ENCODE measurements at regions of chr15 and their contacts with region 1.

Region 1: DNA sequence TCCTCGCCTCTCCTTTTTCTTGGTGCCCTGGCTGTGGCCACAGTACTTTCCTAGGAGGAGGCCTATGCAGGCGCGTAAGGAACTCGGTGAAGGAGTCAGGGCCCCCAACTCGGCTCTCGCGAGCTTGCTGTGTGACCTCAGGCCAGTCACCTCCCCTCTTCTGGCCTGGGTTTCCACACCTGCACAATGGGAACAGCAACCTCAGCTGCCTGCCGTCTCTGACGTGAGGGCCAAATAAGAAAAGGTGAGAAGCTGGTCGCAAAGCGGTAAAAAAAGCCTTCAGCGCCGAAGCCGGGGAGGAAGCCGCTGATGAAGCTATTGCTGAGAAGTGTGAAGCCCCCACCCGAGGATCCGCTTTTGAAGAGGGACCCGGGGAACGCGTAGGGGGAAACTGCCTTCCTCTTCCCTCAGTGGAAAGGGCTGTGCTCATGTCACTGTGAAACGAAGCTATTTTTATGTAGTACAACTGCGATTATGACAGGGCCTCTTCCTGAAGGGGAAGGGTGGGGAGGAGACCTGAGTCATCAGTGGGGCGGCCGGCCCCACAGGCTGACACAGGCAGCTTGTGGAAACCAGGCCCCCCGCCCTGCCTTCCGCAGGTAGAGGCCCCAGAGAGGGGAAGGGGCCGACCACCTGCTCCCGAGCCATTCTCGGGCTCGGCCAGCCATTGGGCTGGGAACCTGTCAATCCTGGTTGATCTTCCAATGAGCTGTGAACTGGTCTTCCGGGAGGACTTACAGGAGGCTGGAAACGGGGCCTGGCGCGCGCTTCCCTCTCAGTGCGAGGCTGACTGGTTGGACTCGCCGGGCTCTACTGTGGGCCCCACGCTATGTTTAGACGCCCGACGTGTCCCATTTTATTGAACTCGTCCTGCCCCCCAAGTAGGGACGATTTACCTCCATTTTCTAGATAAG is 18.0 kb upstream of the ANKDD1A start:
- DNase-seq: peak; percentile 90
- ATAC-seq: peak; percentile 72
- H3K4me3 Mint-ChIP-seq: peak overlapping the region; percentile 89
- H3K27ac Mint-ChIP-seq: peak overlapping the region; percentile 99
- H3K4me1 Mint-ChIP-seq: peaks cover 76% of the 10 kb centered on the region
- H3K27me3 Mint-ChIP-seq: no peaks in the 10 kb centered on the region
- CTCF ChIP-seq: no peak

Region 2: GRCh38 chr15:64731012-64731806 is 162.5 kb before region 1 on chr15:
- CTCF ChIA-PET with region 1: interaction called, 13 read pairs
- POLR2A ChIA-PET with region 1: interaction called, 4 read pairs
- intact Hi-C with region 1: loop called (anchors 1 kb)
- DNase-seq: peak; percentile 77
- ATAC-seq: peak; percentile 74
- H3K4me3 Mint-ChIP-seq: no peak overlapping the region
- H3K27ac Mint-ChIP-seq: no peak overlapping the region
- H3K4me1 Mint-ChIP-seq: peaks cover 7% of the 10 kb centered on the region
- H3K27me3 Mint-ChIP-seq: no peaks in the 10 kb centered on the region
- CTCF ChIP-seq: peak; percentile 61

Region 3: GRCh38 chr15:64825431-64826294 is 68.1 kb before region 1 on chr15 and contains the start of gene PIF1:
- CTCF ChIA-PET with region 1: interaction called, 4 read pairs
- POLR2A ChIA-PET with region 1: interaction called, 24 read pairs
- intact Hi-C with region 1: loop called (anchors 1 kb)
- DNase-seq: peak; percentile 60
- ATAC-seq: peak; percentile 94
- H3K4me3 Mint-ChIP-seq: peak within 1 kb of the TSS; percentile 84
- H3K27ac Mint-ChIP-seq: peak within 1 kb of the TSS; percentile 87
- H3K4me1 Mint-ChIP-seq: peaks cover 31% of the 10 kb centered on the region
- H3K27me3 Mint-ChIP-seq: no peaks in the 10 kb centered on the region
- CTCF ChIP-seq: no peak
- total RNA-seq, gene PIF1: 3.3 and 5.5 TPM in 2 replicates

Region 4: DNA sequence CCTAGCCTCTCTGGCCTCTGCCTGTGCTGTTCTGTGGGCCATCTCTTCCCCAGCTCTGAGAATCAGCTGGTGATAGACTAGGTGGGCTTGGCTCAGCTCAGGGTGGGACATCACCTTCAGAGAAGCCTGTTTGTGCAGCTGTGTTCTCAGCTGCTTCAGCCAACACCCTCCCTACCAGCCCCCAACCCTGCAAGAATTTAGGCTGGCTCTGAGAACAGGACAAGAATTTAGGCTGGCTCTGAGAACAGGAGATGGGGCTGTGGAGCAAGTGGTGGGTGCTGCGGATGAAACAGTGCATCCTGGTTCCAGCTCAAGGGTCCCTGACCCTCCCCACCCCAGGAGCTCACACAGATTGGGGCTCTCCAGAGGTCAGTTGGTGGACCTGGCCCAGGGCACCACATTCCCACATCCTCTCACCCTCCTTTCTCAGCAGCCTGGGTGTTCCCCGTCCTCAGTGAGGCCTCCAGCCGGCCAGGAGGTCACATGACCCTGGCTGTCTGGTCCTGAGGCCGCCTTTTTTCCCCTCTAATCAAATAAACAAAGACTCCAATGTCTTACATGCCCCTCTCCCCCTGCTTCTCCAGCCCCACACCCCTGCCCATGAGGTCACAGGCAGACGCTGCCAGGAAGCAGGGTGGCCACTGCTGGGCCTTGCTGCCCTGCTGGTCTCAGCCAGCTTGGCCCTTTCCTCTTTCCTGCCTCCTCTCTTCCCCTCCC is 37.2 kb before region 1 on chr15:
- CTCF ChIA-PET with region 1: interaction called, 8 read pairs
- POLR2A ChIA-PET with region 1: interaction called, 19 read pairs
- intact Hi-C with region 1: no loop called
- DNase-seq: no peak
- ATAC-seq: no peak
- H3K4me3 Mint-ChIP-seq: peak overlapping the region; percentile 28
- H3K27ac Mint-ChIP-seq: peak overlapping the region; percentile 61
- H3K4me1 Mint-ChIP-seq: peaks cover 53% of the 10 kb centered on the region
- H3K27me3 Mint-ChIP-seq: no peaks in the 10 kb centered on the region
- CTCF ChIP-seq: no peak

Region 5: GRCh38 chr15:64989416-64990167 is 95.9 kb after region 1 on chr15 and contains the start of gene SPG21:
- CTCF ChIA-PET with region 1: no interaction called
- POLR2A ChIA-PET with region 1: interaction called, 17 read pairs
- intact Hi-C with region 1: loop called (anchors 2 kb)
- DNase-seq: peak; percentile 97
- ATAC-seq: peak; percentile 95
- H3K4me3 Mint-ChIP-seq: peak within 1 kb of the TSS; percentile 91
- H3K27ac Mint-ChIP-seq: peak within 1 kb of the TSS; percentile 86
- H3K4me1 Mint-ChIP-seq: peaks cover 48% of the 10 kb centered on the region
- H3K27me3 Mint-ChIP-seq: no peaks in the 10 kb centered on the region
- CTCF ChIP-seq: no peak
- total RNA-seq, gene SPG21: 74.7 and 75.7 TPM in 2 replicates

Region 6: GRCh38 chr15:65312400-65312916 is 418.7 kb after region 1 on chr15:
- CTCF ChIA-PET with region 1: no interaction called
- POLR2A ChIA-PET with region 1: no interaction called
- intact Hi-C with region 1: no loop called
- DNase-seq: no peak
- ATAC-seq: no peak
- H3K4me3 Mint-ChIP-seq: no peak overlapping the region
- H3K27ac Mint-ChIP-seq: no peak overlapping the region
- H3K4me1 Mint-ChIP-seq: no peaks in the 10 kb centered on the region
- H3K27me3 Mint-ChIP-seq: no peaks in the 10 kb centered on the region
- CTCF ChIP-seq: no peak